Lower lobe of right lung (tissue), 2 donors: ENCODE measurements at regions of chr21 and their contacts with region 1.

Region 1: GRCh38 chr21:41283211-41283818 is 33.3 kb upstream of the FAM3B start:
- DNase-seq: no peak
- ATAC-seq: peak; percentile 94 to 96
- H3K4me3 ChIP-seq: no peak overlapping the region
- H3K27ac ChIP-seq: no peak overlapping the region
- H3K4me1 ChIP-seq: no peaks in the 10 kb centered on the region
- H3K27me3 ChIP-seq: no peaks in the 10 kb centered on the region
- CTCF ChIP-seq: peak; percentile 75

Region 2: DNA sequence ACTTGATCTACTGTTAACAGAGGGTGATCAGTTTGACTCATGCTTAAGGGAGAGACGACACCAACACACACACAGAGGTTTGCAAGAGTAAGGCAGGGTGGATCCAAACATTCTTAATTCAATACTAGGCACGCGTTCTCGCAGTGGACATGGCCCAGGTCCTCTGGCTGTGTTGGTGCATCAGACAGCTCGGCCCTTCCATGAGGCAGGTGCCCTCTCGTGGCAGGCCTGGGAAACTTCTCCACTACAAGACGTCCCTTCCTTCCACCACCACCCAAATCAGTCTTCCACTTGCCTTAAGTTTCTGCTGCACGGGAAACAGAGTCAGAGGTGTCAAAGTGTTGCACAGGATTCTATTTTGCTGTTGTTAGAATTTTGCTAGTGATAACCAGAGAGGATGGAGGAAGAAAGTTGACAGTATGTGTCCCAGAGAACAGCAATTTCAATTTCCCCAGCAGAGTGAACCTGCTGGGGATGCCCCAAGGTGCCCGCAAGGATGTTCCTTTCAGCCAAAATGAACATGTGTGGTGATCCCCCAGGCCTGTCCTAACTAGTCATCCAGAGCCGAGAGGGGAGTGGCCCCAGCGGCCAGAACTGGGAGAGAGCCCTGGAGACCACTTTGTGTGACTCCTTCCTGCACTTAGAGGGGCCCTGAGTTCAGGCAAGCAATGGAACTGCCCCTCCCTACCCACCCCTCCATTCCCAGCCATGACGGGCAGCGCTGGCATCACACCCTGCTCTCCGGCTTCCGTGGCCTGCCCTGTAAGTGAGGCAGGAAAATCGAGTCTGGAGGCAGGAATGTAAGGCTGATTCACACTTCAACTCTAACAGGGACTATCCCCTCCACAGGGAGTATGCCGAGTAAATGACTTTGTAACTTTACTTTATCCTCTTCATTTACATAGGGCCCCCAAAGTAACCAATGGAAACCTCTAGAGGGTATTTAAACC is 177.5 kb after region 1 on chr21:
- intact Hi-C with region 1: loop called (anchors 5 kb)
- DNase-seq: peak; percentile 83
- ATAC-seq: peak; percentile 86 to 90
- H3K4me3 ChIP-seq: no peak overlapping the region
- H3K27ac ChIP-seq: no peak overlapping the region
- H3K4me1 ChIP-seq: no peaks in the 10 kb centered on the region
- H3K27me3 ChIP-seq: no peaks in the 10 kb centered on the region
- CTCF ChIP-seq: peak; percentile 80